Mammary epithelial cell (primary cell): ENCODE measurements at regions of chr1 and their contacts with region 1.

Region 1: DNA sequence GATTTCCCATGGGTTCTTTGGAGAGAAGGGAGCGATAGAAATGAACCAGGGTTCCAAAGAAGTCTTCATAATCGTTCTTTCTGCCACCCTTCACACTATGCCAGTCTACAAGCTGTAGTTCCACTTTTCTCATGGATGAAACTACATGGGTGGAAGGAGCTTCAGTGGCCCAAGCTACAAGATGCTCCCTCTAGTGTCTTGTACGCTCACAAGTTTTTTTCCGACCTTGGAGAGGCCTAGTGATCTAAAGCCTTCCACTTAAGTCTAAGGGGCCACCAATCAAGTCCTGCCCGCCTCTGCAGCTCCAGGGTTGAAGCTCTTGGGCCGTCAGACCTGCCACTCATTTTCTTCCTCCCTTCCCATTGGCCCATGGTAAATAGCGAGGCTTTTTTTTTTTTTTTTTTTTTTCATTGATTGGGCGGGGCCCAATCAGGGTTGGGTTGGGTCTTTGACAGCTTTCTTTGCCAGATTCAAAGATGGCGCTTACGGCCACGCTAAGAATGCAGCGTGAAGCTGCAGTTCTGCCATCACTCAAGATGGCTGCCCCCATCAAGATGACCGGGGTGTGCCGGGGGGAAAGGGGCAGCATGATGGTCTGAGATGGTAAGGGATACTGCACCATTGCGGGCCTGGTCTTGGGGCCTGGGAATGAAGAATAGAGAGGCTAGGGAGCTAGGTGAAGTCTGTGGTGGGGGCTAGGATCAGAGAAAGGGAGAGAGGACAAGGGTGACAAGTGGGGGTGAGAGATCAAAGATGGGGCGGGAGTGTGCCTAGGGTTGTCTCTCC is at the start of gene TOMM40L:
- DNase-seq: peak; percentile 99
- H3K4me3 ChIP-seq: peak within 1 kb of the TSS; percentile 71 to 72 (median 71)
- H3K27ac ChIP-seq: peak within 1 kb of the TSS; percentile 40
- H3K4me1 ChIP-seq: peaks cover 14% of the 10 kb centered on the region
- H3K27me3 ChIP-seq: no peaks in the 10 kb centered on the region
- CTCF ChIP-seq: peak; percentile 58 to 70
- total RNA-seq, gene TOMM40L: 13.8 to 16.3 TPM

Region 2: DNA sequence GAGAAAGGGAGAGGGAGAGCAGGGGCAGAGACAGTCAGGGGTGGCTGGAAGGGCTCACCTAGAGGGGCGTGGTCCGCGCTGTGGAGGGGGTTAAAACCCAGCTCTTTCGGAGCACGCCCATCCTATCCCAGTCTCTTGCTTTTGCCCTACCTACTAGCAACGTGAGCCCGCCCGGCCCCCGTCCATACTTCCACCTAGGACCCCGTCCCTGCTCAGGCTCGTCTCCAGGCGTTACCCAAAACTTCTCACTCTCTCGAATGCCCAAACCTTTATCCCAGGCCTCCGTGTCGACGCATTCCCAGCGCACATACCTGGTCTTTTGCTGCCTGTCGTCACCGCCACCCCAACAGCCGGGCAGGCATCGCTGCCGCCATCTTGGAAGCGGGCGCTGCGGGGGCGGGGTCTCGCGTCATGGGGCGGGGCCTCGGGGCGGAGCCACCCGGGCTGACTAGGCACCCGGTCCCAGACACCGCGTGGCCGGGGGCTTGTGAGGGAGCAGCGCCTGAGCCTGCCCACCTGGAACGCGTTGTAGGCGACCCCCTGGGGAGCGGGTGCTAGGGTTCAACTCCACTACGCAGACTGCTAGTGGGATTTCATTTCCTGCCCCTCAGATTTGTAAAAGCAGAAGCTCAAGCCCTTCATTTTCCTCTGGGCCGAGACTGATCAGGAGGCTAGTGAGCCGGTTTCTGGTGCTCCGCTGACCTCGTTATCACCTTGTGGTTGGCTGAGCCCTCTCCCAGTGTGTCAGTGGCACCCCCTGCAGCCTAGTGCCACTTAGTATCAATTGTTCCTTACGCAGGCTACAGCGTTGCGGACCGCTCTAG is 48.4 kb before region 1 on chr1 and contains the start of gene B4GALT3:
- CTCF ChIA-PET with region 1: interaction called, 5 read pairs
- dilution Hi-C with region 1: no loop called
- in situ Hi-C with region 1: no loop called
- intact Hi-C with region 1: loop called (anchors 2 kb)
- DNase-seq: peak; percentile 76
- H3K4me3 ChIP-seq: peak within 1 kb of the TSS; percentile 76 to 97 (median 83)
- H3K27ac ChIP-seq: peak within 1 kb of the TSS; percentile 88
- H3K4me1 ChIP-seq: peaks cover 17% of the 10 kb centered on the region
- H3K27me3 ChIP-seq: no peaks in the 10 kb centered on the region
- CTCF ChIP-seq: peak in 1 of 2 donors; percentile 34
- total RNA-seq, gene B4GALT3: 25.8 to 32.1 TPM

Region 3: DNA sequence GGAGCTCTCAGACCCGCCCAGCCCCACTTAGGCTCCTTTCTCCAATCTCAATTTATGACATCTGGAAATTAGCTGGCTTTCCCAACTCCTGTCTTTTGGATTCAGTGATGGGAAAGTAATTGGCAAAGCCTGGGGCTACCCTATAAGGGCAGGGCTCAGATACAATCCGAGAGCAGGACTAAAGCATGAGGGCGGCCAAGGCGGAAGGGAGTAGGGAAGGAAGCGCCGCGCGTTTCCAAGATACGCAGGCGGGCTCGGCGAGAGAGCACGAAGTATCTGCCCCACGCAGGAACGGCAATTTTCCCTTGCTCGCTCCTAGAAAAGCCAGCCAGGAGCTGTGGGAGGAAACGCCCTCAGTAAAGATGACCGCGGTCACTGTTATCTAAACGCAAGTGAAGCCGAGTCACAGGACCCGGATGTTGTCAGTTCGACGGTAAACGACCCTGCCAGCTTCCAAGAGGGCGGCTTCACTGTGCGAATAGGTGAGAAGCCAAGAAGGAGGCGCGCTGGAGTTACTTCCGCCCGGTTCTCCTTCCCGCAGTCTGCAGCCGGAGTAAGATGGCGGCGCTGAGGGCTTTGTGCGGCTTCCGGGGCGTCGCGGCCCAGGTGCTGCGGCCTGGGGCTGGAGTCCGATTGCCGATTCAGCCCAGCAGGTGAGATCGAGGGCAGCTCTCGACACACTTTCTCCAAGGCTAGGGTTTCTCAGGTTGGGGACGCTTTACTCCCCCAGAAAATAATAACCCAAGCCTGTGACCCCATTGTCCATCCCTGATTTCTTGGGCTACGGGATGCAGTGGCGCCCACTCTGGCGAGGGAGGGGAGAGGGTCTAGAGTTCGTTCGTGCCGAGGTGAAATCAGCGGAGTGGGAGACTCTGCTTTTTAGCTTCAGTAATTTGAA is 23.6 kb before region 1 on chr1 and contains the start of gene NDUFS2:
- CTCF ChIA-PET with region 1: interaction called, 22 read pairs
- dilution Hi-C with region 1: no loop called
- in situ Hi-C with region 1: no loop called
- intact Hi-C with region 1: no loop called
- DNase-seq: peak; percentile 97
- H3K4me3 ChIP-seq: peak within 1 kb of the TSS; percentile 71 to 89 (median 81)
- H3K27ac ChIP-seq: peak within 1 kb of the TSS; percentile 74
- H3K4me1 ChIP-seq: peaks cover 42% of the 10 kb centered on the region
- H3K27me3 ChIP-seq: no peaks in the 10 kb centered on the region
- CTCF ChIP-seq: peak in 1 of 2 donors; percentile 20
- total RNA-seq, gene NDUFS2: 69.3 to 82.6 TPM

Region 4: GRCh38 chr1:161266202-161266601 is 40.5 kb after region 1 on chr1:
- CTCF ChIA-PET with region 1: no interaction called
- dilution Hi-C with region 1: no loop called
- in situ Hi-C with region 1: no loop called
- intact Hi-C with region 1: no loop called
- DNase-seq: no peak
- H3K4me3 ChIP-seq: no peak overlapping the region
- H3K27ac ChIP-seq: no peak overlapping the region
- H3K4me1 ChIP-seq: no peaks in the 10 kb centered on the region
- H3K27me3 ChIP-seq: no peaks in the 10 kb centered on the region
- CTCF ChIP-seq: no peak

Region 5: GRCh38 chr1:161292631-161293030 is 66.9 kb after region 1 on chr1:
- CTCF ChIA-PET with region 1: interaction called, 18 read pairs
- dilution Hi-C with region 1: no loop called
- in situ Hi-C with region 1: loop called (anchors 5 kb)
- intact Hi-C with region 1: loop called (anchors 1 kb)
- DNase-seq: no peak
- H3K4me3 ChIP-seq: no peak overlapping the region
- H3K27ac ChIP-seq: no peak overlapping the region
- H3K4me1 ChIP-seq: no peaks in the 10 kb centered on the region
- H3K27me3 ChIP-seq: no peaks in the 10 kb centered on the region
- CTCF ChIP-seq: no peak

Region 6: GRCh38 chr1:161314201-161314981 is 88.7 kb after region 1 on chr1 and contains the start of gene SDHC:
- CTCF ChIA-PET with region 1: no interaction called
- dilution Hi-C with region 1: no loop called
- in situ Hi-C with region 1: no loop called
- intact Hi-C with region 1: loop called (anchors 2 kb)
- DNase-seq: peak; percentile 77
- H3K4me3 ChIP-seq: peak within 1 kb of the TSS; percentile 75 to 92 (median 88)
- H3K27ac ChIP-seq: peak within 1 kb of the TSS; percentile 93
- H3K4me1 ChIP-seq: peaks cover 14% of the 10 kb centered on the region
- H3K27me3 ChIP-seq: no peaks in the 10 kb centered on the region
- CTCF ChIP-seq: peak; percentile 53 to 67
- total RNA-seq, gene SDHC: 26.0 to 180 TPM

Region 7: GRCh38 chr1:161389691-161390558 is 164.2 kb after region 1 on chr1:
- CTCF ChIA-PET with region 1: no interaction called
- dilution Hi-C with region 1: loop called (anchors 25 kb)
- in situ Hi-C with region 1: loop called (anchors 5 to 10 kb)
- intact Hi-C with region 1: no loop called
- DNase-seq: peak; percentile 97
- H3K4me3 ChIP-seq: peak overlapping the region; percentile 56 to 91 (median 90)
- H3K27ac ChIP-seq: peak overlapping the region; percentile 83
- H3K4me1 ChIP-seq: peaks cover 14% of the 10 kb centered on the region
- H3K27me3 ChIP-seq: no peaks in the 10 kb centered on the region
- CTCF ChIP-seq: no peak